Activated CD8-positive, alpha-beta T cell treated with anti-CD3 and anti-CD28 coated beads for 36 hours (primary cell): ENCODE measurements at regions of chr16 and their contacts with region 1.

Region 1: DNA sequence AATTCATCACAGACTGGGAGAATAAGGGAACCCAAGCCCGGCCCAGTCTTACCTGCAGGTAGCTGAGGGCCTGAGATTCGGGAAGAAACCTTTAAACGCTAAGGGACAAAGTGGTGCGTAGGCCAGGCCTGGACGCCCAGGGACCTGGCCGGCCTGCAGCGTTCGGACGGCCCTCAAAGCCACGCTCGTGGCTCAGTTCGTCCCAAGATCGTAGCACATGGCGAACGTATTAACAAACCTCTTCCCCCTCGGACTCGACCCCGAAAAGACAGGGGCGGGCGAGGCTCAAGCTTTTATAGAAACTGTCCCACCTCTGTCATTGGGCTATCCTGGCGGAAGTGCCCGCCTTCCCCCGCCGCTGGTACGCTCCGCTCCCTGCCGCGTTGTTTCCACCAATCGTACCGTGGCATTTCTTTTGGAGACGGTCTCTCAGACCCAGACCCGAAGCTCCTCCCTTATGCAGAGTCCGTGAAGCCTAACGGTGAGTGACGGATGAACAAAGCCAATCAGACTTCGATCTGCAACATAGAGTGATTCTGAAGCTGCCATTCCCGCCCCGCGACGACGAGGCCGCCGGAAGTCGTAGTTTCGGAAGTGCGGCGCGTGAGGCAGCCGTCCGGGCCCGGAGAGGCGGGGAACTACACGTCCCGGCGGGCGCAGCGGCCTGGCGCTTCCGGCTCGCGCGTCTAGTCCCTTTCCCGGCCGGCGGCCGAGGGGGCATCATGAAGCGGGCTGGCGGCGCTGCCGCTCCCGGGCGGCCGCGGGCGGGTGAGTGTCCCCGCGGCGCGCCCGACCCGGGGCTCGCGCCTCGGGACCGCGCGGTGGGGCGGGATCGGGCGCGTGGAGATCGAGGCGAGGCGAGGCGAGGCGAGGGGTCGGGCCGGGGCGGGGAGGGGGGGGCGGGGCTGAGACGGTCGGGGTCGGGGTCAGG is at the start of gene TRAF7:
- DNase-seq: peak; percentile 99
- ATAC-seq: peak; percentile 95
- H3K4me3 Mint-ChIP-seq: peak within 1 kb of the TSS; percentile 86
- H3K27ac Mint-ChIP-seq: peak within 1 kb of the TSS; percentile 89
- H3K4me1 Mint-ChIP-seq: peaks cover 30% of the 10 kb centered on the region
- H3K27me3 Mint-ChIP-seq: no peaks in the 10 kb centered on the region
- CTCF ChIP-seq: no peak
- total RNA-seq, gene TRAF7: 74.8 to 80.2 TPM

Region 2: GRCh38 chr16:1971796-1972489 is 183.4 kb before region 1 on chr16 and contains the start of gene TBL3:
- CTCF ChIA-PET with region 1: no interaction called
- POLR2A ChIA-PET with region 1: interaction called, 80 read pairs
- intact Hi-C with region 1: no loop called
- DNase-seq: peak; percentile 97
- ATAC-seq: peak; percentile 98
- H3K4me3 Mint-ChIP-seq: peak within 1 kb of the TSS; percentile 95
- H3K27ac Mint-ChIP-seq: peak within 1 kb of the TSS; percentile 94
- H3K4me1 Mint-ChIP-seq: peaks cover 20% of the 10 kb centered on the region
- H3K27me3 Mint-ChIP-seq: no peaks in the 10 kb centered on the region
- CTCF ChIP-seq: no peak
- total RNA-seq, gene TBL3: 54.4 to 56.0 TPM

Region 3: DNA sequence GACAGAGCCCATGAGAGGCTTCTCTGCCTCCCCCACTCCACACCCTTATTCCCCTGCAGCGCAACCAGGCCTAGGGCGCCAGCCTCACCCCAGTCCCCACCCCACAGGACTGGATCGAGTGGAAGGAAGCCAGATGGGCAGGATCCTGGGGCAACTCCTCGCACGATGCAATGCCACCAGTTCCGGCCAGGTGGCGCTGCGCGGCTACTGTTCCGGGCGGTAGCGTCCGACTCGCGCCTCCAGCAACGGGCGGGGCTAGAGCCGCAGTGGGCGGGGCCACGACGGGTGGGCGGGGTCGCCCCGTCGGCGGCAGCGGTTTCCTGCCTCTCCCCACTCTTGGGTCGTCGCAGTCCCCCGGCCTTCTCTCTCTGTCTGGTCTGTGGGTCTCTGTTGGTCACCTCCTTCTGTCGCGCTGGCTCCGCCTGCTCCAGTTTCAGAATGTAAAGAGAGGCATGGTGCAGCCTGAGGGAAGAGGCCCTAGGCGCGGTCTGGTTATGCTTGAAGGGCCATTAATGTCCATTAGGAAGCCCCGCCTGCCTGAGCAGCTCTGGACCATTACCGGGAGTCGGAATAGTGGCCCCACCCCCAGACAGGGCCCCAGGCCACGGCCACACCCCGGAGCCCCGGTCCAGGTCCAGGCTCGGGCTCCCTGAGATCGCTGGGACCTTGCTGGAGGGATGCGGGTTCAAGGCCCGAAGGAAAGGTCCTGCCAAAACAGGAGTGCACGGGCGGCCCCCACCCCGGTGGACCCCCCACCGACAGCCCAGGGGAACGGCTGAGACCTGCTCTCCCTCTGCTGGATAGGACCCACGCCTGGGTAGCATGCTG is 132.0 kb before region 1 on chr16:
- CTCF ChIA-PET with region 1: interaction called, 6 read pairs
- POLR2A ChIA-PET with region 1: interaction called, 16 read pairs
- intact Hi-C with region 1: no loop called
- DNase-seq: peak; percentile 95
- ATAC-seq: peak; percentile 89
- H3K4me3 Mint-ChIP-seq: peak overlapping the region; percentile 49
- H3K27ac Mint-ChIP-seq: no peak overlapping the region
- H3K4me1 Mint-ChIP-seq: peaks cover 24% of the 10 kb centered on the region
- H3K27me3 Mint-ChIP-seq: peaks cover 29% of the 10 kb centered on the region
- CTCF ChIP-seq: peak; percentile 97

Region 4: DNA sequence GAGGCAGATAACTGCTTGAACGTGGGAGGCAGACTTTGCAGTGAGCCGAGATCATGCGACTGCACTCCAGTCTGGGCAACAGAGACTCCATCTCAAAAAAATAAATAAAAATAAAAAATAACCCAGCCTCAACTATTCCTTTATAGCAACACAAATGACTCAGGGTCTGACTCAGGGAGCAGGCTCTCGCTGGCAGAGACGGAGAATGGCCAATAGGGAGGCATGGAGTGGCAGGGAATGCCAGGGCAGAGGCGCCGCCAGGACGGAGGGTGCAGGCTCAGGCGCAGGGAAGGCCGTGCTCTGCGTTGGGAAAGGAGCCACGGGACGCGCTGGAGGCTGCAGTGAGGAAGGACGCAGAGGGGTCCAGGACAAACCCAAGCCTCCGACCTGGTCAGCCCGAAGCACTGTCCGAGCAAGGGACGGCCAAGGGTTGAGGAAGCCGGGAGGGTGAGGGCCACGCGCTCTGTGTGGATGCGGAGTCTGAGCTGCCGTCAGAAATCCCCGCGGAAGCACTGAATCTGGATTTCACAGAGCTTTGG is 60.0 kb before region 1 on chr16:
- CTCF ChIA-PET with region 1: no interaction called
- POLR2A ChIA-PET with region 1: no interaction called
- intact Hi-C with region 1: no loop called
- DNase-seq: no peak
- ATAC-seq: no peak
- H3K4me3 Mint-ChIP-seq: no peak overlapping the region
- H3K27ac Mint-ChIP-seq: no peak overlapping the region
- H3K4me1 Mint-ChIP-seq: no peaks in the 10 kb centered on the region
- H3K27me3 Mint-ChIP-seq: no peaks in the 10 kb centered on the region
- CTCF ChIP-seq: no peak

Region 5: GRCh38 chr16:2194852-2195321 is 39.5 kb after region 1 on chr16:
- CTCF ChIA-PET with region 1: interaction called, 7 read pairs
- POLR2A ChIA-PET with region 1: interaction called, 18 read pairs
- intact Hi-C with region 1: no loop called
- DNase-seq: peak; percentile 75
- ATAC-seq: peak; percentile 77
- H3K4me3 Mint-ChIP-seq: peak overlapping the region; percentile 55
- H3K27ac Mint-ChIP-seq: no peak overlapping the region
- H3K4me1 Mint-ChIP-seq: peaks cover 3% of the 10 kb centered on the region
- H3K27me3 Mint-ChIP-seq: peaks cover 23% of the 10 kb centered on the region
- CTCF ChIP-seq: peak; percentile 63

Region 6: DNA sequence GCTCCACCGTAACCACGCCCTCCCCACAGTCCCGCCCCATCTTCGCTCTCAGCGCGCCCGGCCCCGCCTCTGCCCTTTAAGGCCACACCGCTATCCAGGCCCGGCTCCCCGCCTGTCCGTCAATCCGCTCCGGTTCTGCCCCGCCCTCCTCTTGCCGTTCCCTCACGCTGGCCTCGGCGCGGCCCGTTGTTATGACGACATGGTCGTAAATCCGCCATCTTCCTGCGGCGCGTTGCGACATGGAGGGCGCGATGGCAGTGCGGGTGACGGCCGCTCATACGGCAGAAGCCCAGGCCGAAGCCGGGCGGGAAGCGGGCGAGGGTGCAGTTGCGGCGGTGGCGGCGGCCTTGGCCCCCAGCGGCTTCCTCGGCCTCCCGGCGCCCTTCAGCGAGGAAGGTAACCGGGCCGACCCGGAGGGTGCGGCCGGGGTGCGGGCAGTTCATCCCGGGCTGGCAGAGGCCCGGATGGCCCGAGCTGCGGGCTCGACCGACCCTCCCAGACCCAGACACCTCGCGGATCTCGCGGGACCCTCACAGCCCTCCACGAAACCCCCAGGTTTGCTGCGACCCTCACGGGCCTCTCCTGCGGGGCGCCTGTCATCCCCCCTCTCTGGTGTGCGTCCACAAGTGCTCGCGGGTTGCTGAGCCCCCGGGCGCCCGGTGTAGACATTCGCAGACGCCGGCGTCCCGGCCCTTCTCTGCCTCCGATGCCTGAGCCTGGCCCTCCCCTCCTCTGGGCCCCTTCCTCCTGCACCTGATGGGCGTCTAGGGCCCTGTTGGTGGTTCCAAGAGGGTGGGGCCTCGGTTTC is 68.2 kb after region 1 on chr16 and contains the start of gene E4F1:
- CTCF ChIA-PET with region 1: no interaction called
- POLR2A ChIA-PET with region 1: interaction called, 19 read pairs
- intact Hi-C with region 1: no loop called
- DNase-seq: peak; percentile 100
- ATAC-seq: peak; percentile 99
- H3K4me3 Mint-ChIP-seq: peak within 1 kb of the TSS; percentile 80
- H3K27ac Mint-ChIP-seq: peak within 1 kb of the TSS; percentile 52
- H3K4me1 Mint-ChIP-seq: peaks cover 10% of the 10 kb centered on the region
- H3K27me3 Mint-ChIP-seq: no peaks in the 10 kb centered on the region
- CTCF ChIP-seq: no peak
- total RNA-seq, gene E4F1: 19.4 to 21.1 TPM

Region 7: DNA sequence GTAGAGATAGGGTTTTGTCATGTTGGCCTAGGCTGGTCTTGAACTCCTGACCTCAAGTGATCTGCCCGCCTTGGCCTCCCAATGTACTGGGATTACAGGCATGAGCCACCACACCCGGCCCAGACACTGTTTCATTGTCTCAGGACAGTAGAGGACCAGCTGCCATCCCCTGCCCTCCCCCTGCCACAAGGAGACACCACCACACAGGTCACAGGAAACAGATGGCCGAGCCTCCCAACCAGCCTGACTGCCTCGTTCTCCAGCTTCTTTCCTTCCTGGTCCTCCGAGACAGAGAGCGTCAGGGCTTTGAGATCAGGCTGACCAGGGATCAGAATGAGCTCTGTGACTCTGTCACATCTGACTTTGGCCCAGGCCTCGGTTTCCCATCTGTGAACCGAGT is 133.4 kb after region 1 on chr16:
- CTCF ChIA-PET with region 1: no interaction called
- POLR2A ChIA-PET with region 1: no interaction called
- intact Hi-C with region 1: no loop called
- DNase-seq: no peak
- ATAC-seq: no peak
- H3K4me3 Mint-ChIP-seq: no peak overlapping the region
- H3K27ac Mint-ChIP-seq: no peak overlapping the region
- H3K4me1 Mint-ChIP-seq: no peaks in the 10 kb centered on the region
- H3K27me3 Mint-ChIP-seq: no peaks in the 10 kb centered on the region
- CTCF ChIP-seq: no peak

Region 8: DNA sequence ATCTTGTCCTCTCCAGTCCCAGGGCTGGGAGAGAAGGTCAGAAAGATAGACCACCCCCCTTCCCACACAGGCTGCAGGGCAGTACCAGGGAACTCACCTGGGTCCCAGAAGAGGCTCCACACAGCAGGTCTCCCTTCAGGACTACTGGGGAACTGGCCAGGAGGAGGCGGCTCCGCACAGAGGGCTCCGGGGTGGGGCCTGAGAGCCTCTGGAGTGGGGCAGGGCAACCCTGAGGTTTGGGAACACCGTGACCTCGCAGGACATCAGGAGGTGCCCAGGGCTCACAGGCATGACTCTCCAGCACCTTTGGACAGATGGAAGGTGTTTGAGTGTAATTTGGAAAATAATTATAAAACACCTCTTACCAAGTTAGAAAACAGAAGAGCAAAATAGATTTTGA is 174.2 kb after region 1 on chr16:
- CTCF ChIA-PET with region 1: no interaction called
- POLR2A ChIA-PET with region 1: no interaction called
- intact Hi-C with region 1: no loop called
- DNase-seq: no peak
- ATAC-seq: no peak
- H3K4me3 Mint-ChIP-seq: no peak overlapping the region
- H3K27ac Mint-ChIP-seq: no peak overlapping the region
- H3K4me1 Mint-ChIP-seq: no peaks in the 10 kb centered on the region
- H3K27me3 Mint-ChIP-seq: peaks cover 8% of the 10 kb centered on the region
- CTCF ChIP-seq: no peak